Tibial artery (tissue), 4 donors: ENCODE measurements at regions of chr5 and their contacts with region 1.

Region 1: DNA sequence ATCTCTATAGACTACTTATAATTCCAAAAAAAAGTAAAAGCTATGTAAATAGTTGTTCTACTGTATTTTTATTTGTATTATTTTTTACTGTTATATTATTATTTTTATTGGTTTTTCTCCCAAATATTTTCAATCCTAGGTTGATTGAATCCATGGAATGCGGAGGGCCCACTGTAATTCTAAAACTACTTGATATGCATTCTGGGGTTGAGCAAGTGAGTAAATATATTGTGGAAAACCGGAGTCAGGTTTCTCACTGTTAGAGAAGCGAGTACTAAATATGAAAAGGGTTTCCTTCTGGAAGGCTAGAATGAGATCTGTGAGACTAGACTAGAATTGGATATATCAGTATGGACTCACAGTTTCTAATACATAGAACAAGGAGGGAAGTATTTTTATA is 66.5 kb downstream of the FBXW11 start:
- DNase-seq: no peak
- H3K4me3 ChIP-seq: no peak overlapping the region
- H3K27ac ChIP-seq: no peak overlapping the region
- H3K4me1 ChIP-seq: peaks cover 0 to 21% (median 2%) of the 10 kb centered on the region in 4 donors
- H3K27me3 ChIP-seq: no peaks in the 10 kb centered on the region
- CTCF ChIP-seq: no peak

Region 2: DNA sequence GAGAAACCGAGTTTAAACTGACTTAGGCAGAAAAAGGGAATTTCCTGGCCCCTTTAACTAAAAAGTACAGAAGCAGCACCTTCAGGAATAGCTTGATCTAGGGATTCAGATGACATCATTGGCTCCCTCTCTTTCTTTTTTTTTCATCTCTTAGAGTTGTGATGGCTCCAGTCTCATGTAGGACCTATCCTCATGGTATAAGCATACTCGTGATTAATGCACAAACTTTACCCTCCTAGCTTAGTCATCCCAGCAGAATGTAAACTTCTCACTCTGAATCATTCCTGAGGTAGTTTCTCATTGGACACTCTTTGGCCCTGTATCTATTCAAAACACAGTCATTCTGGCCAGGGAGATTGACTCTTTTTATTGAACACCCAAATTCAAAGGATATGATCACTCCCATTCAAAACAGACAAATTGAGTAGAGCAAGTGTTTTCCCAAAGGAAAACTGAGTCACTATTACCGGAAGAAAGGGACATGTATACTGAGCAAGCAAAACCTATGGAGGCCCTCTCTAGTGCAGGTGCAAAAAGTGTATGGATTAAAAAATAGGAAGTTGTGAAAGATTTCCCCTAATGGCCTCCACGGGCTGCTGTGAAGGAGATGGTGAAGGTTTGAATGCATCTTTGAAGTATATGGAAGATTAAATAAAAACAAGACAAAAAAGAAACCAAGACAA is 182.0 kb before region 1 on chr5:
- intact Hi-C with region 1: no loop called
- DNase-seq: no peak
- H3K4me3 ChIP-seq: no peak overlapping the region
- H3K27ac ChIP-seq: no peak overlapping the region
- H3K4me1 ChIP-seq: peaks cover 0 to 16% (median 6%) of the 10 kb centered on the region in 4 donors
- H3K27me3 ChIP-seq: no peaks in the 10 kb centered on the region
- CTCF ChIP-seq: no peak

Region 3: DNA sequence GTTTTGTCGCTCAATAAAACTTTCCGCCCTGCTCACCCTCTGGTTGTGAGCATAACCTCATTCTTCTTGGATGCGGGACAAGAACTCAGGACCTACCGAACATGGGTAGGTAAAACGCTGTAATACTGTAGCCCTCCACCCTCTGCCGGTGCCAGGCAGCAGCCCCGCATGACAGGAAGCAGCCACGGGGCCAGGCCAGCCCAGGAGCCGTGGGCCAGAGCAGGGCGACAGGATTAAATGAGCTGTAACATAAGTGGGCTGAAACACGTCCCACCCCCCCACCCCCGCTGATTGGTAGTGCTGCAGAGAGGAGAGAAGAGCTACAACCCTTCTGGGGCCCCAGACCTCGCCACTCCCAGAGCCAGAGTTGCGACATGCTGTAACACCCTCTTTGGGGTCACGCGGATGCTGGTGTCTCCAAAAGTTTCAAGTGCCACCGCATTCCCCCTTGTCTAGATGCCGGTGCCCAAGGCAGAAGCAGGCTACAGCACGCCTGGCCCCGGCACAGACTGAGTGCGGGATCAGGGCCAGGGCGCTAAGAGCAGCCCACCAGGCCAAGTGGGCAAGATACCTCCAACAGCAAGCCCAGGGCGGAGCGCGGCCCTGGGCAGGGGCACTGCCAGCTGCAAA is 15.3 kb before region 1 on chr5:
- intact Hi-C with region 1: loop called (anchors 2 kb)
- DNase-seq: no peak
- H3K4me3 ChIP-seq: no peak overlapping the region
- H3K27ac ChIP-seq: no peak overlapping the region
- H3K4me1 ChIP-seq: peaks cover 0 to 14% (median 1%) of the 10 kb centered on the region in 4 donors
- H3K27me3 ChIP-seq: no peaks in the 10 kb centered on the region
- CTCF ChIP-seq: no peak